ENCODE measurements at regions of chr1 and their contacts with region 1.

Region 1: GRCh38 chr1:70410604-70411359 is at the start of gene CTH:
- DNase-seq: peak; percentile 85
- H3K4me3 ChIP-seq: peak within 1 kb of the TSS; percentile 72
- H3K27ac ChIP-seq: peak within 1 kb of the TSS; percentile 98
- H3K27me3 ChIP-seq: no peaks in the 10 kb centered on the region
- CTCF ChIP-seq: no peak
- polyA plus RNA-seq, gene CTH: 7.9 and 9.6 TPM in 2 replicates

Region 2: GRCh38 chr1:70354332-70355110 is 56.3 kb before region 1 on chr1 and contains the start of gene ANKRD13C:
- CTCF ChIA-PET with region 1: no interaction called
- POLR2A ChIA-PET with region 1: interaction called, 40 read pairs
- DNase-seq: peak; percentile 90
- H3K4me3 ChIP-seq: peak within 1 kb of the TSS; percentile 98
- H3K27ac ChIP-seq: peak within 1 kb of the TSS; percentile 99
- H3K27me3 ChIP-seq: no peaks in the 10 kb centered on the region
- CTCF ChIP-seq: peak; percentile 21; the same call in 1 of the 2 replicates
- polyA plus RNA-seq, gene ANKRD13C: 12.5 and 18.1 TPM in 2 replicates

Region 3: GRCh38 chr1:70397014-70397413 is 13.8 kb before region 1 on chr1:
- CTCF ChIA-PET with region 1: no interaction called
- POLR2A ChIA-PET with region 1: no interaction called
- DNase-seq: no peak
- H3K4me3 ChIP-seq: no peak overlapping the region
- H3K27ac ChIP-seq: no peak overlapping the region
- H3K27me3 ChIP-seq: no peaks in the 10 kb centered on the region
- CTCF ChIP-seq: no peak

Measured in AG04450 (cell line).